ENCODE measurements at regions of chr1 and their contacts with region 1.

Region 1: GRCh38 chr1:45018599-45019230 is 6.7 kb downstream of the UROD start:
- DNase-seq: peak; percentile 49 to 66 (median 56)
- H3K4me3 ChIP-seq: no peak overlapping the region
- H3K4me3 Mint-ChIP-seq: no peak overlapping the region
- H3K27ac ChIP-seq: no peak overlapping the region
- H3K27ac Mint-ChIP-seq: peak overlapping the region; percentile 4 to 80 (median 70)
- H3K4me1 ChIP-seq: no peaks in the 10 kb centered on the region
- H3K4me1 Mint-ChIP-seq: peaks cover 9 to 18% (median 10%) of the 10 kb centered on the region in 4 donors
- H3K27me3 ChIP-seq: no peaks in the 10 kb centered on the region
- H3K27me3 Mint-ChIP-seq: no peaks in the 10 kb centered on the region

Region 2: GRCh38 chr1:44973645-44974044 is 45.1 kb before region 1 on chr1:
- CTCF ChIA-PET with region 1: no interaction called
- POLR2A ChIA-PET with region 1: no interaction called
- intact Hi-C with region 1: no loop called
- DNase-seq: no peak
- H3K4me3 ChIP-seq: no peak overlapping the region
- H3K4me3 Mint-ChIP-seq: no peak overlapping the region
- H3K27ac ChIP-seq: no peak overlapping the region
- H3K27ac Mint-ChIP-seq: peak overlapping the region in 3 of 7 donors; percentile 48 to 66 (median 65)
- H3K4me1 ChIP-seq: no peaks in the 10 kb centered on the region
- H3K4me1 Mint-ChIP-seq: peaks cover 0 to 10% (median 5%) of the 10 kb centered on the region in 4 donors
- H3K27me3 ChIP-seq: no peaks in the 10 kb centered on the region
- H3K27me3 Mint-ChIP-seq: no peaks in the 10 kb centered on the region

Region 3: GRCh38 chr1:45111239-45111638 is 92.5 kb after region 1 on chr1:
- CTCF ChIA-PET with region 1: no interaction called
- POLR2A ChIA-PET with region 1: no interaction called
- intact Hi-C with region 1: no loop called
- DNase-seq: no peak
- H3K4me3 ChIP-seq: no peak overlapping the region
- H3K4me3 Mint-ChIP-seq: no peak overlapping the region
- H3K27ac ChIP-seq: no peak overlapping the region
- H3K27ac Mint-ChIP-seq: no peak overlapping the region
- H3K4me1 ChIP-seq: peaks cover 5% of the 10 kb centered on the region
- H3K4me1 Mint-ChIP-seq: peaks cover 5 to 14% (median 8%) of the 10 kb centered on the region in 4 donors
- H3K27me3 ChIP-seq: no peaks in the 10 kb centered on the region
- H3K27me3 Mint-ChIP-seq: no peaks in the 10 kb centered on the region

Region 4: DNA sequence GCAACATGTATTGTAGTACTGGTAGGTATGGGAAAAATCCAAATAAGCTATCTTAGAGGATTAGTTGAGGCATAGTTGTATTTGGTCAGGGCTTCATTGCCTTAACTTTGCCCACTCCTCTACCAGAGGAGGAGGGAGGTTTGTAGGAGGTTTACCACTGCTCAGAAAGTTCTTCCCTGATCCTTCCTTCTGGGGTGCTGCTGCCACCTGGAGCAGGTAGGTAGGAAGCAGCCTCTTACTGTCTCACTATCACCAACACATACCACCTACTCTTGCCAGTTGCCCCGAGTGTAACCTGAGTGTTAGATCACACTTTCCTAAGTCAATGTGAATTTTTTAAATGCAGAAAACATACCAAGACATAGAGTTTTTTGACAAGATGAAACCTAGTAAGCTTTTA is 211.8 kb after region 1 on chr1:
- CTCF ChIA-PET with region 1: interaction called, 9 read pairs
- POLR2A ChIA-PET with region 1: interaction called, 3 read pairs
- intact Hi-C with region 1: loop called (anchors 1 kb)
- DNase-seq: peak in 4 of 5 donors; percentile 11 to 26 (median 16)
- H3K4me3 ChIP-seq: no peak overlapping the region
- H3K4me3 Mint-ChIP-seq: no peak overlapping the region
- H3K27ac ChIP-seq: no peak overlapping the region
- H3K27ac Mint-ChIP-seq: no peak overlapping the region
- H3K4me1 ChIP-seq: no peaks in the 10 kb centered on the region
- H3K4me1 Mint-ChIP-seq: no peaks in the 10 kb centered on the region
- H3K27me3 ChIP-seq: no peaks in the 10 kb centered on the region
- H3K27me3 Mint-ChIP-seq: peaks cover 0 to 1% of the 10 kb centered on the region in 2 donors

Region 5: GRCh38 chr1:45291716-45292115 is 273.0 kb after region 1 on chr1:
- CTCF ChIA-PET with region 1: interaction called, 388 read pairs
- POLR2A ChIA-PET with region 1: no interaction called
- intact Hi-C with region 1: no loop called
- DNase-seq: no peak
- H3K4me3 ChIP-seq: no peak overlapping the region
- H3K4me3 Mint-ChIP-seq: no peak overlapping the region
- H3K27ac ChIP-seq: no peak overlapping the region
- H3K27ac Mint-ChIP-seq: no peak overlapping the region
- H3K4me1 ChIP-seq: no peaks in the 10 kb centered on the region
- H3K4me1 Mint-ChIP-seq: no peaks in the 10 kb centered on the region
- H3K27me3 ChIP-seq: no peaks in the 10 kb centered on the region
- H3K27me3 Mint-ChIP-seq: no peaks in the 10 kb centered on the region

Measured in CD4-positive, alpha-beta memory T cell (primary cell).